ENCODE measurements at regions of chr1 and their contacts with region 1.

Region 1: DNA sequence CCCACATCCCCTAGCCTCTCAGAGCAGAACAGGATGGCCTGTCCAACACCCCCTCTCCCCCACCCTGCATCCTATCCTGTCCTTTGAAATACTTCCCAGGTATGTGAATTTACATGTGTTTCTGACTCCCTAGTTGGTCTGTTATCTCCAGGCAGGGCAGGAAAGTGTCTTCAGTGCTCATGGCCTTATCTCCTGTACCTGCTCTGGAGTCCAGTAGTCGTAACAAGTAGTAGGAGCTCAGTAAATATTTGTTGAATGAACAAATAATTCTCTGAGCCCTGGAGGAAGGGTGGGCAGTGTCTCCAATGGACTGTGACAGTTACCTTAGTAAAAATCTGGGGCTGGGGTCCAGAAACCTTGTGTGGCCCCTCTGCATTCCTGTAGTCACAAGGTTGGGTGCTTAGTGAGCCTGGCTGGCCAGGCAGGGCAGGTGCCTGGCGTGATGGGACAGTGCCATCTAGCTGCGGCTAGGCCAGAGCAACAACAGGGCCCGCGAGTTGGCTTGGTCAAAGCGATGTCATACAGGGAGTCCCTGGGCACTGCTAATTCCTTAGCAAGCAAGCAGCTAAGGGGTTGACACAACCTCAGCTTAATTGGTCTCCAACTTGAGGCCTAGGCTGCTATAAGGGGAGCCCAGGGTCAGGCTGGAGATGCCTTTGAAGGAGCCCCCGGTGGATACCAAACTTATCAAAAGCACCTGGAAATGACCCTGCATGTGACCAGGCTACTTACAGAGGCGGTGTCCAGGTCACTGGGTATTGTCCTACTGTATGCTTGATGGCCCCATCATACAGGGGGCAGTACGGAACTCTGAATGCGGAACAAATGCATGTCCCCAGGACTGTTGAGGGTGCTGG is 89.0 kb upstream of the PPM1J start:
- DNase-seq: no peak
- H3K4me3 ChIP-seq: no peak overlapping the region
- CTCF ChIP-seq: peak; percentile 89

Region 2: DNA sequence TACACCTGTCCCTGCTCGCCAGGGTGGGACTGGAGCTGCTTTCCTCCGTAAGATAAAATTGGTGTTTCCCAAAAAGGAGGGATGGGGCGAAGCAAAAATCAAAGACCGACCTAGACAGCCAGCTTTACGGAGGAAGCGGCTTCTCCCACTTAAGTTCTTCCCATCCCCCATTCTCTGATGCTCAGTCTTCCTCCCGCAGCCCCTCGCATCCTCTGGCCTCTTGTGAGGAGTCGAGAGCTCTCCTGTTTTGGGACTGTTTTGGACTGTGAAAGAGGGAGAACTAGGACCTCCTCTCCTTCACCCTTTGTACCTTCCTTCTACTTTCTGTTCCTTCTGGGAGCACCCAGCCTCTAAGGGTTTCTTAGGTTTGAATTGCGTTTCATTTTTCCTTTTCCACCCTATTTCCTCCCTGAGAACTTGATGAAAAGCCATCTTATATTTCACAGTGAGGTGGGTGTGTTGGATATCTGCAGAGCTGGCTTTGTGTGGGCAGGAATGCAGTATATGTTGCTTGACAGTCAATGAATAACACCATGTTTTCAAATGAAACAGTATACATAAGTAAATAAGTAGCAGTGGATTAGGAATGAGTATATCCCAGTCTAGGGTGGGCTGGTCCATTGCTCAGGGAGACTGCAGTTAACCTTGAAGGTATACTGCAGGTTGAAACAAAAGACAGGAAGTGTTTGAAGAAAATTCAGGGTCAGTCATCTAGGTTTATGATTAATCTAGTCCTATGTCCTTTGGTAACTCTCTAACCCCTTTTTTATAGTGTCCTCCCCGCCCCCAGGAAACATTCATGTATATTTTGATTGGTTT is 407.3 kb before region 1 on chr1:
- CTCF ChIA-PET with region 1: no interaction called
- POLR2A ChIA-PET with region 1: no interaction called
- DNase-seq: no peak
- H3K4me3 ChIP-seq: peak overlapping the region; percentile 98
- CTCF ChIP-seq: no peak

Region 3: GRCh38 chr1:112722601-112723510 is 81.3 kb before region 1 on chr1:
- CTCF ChIA-PET with region 1: interaction called, 1,029 read pairs
- POLR2A ChIA-PET with region 1: interaction called, 3 read pairs
- DNase-seq: no peak
- H3K4me3 ChIP-seq: peak overlapping the region; percentile 8; the same call in 1 of the 2 replicates
- CTCF ChIP-seq: no peak

Region 4: DNA sequence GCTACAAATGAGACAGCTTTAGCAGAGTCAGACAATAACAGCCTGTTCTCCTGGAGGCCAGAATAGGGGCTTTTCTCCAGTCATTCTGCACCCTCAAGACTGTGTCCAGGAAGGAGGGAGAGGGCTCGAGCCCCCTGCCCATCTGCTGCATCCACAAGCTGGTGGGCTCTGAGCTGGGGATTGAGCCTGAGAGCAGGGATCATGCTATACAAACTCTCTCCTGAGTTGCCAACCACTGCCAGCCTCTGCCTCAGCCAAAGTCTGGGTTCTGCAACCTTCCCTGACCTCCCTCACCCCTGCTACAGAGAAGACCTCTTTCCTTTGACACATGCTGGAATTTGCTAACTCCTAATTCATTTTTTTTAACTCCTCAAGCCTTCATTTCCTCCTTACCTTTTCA is 74.2 kb before region 1 on chr1:
- CTCF ChIA-PET with region 1: interaction called, 40 read pairs
- POLR2A ChIA-PET with region 1: interaction called, 3 read pairs
- DNase-seq: no peak
- H3K4me3 ChIP-seq: no peak overlapping the region
- CTCF ChIP-seq: no peak

Region 5: DNA sequence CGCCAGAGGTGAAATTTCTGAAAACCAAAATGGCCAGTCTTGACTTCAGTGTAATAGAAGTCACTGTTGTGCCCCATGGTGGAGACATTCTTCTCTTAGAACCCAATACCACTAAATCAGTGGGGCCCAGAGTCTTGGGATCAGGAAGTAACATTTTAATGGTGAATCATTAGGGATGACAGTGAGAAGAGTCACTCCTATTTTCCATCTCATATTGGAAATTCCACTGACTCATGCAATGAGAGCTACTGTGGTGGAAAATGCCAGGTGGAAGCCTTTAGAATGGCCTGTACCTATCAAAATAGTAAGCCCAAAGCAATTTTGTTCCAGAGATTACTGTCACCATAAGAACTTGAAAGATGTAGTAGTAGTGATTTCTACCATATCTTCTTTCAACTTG is 68.4 kb before region 1 on chr1:
- CTCF ChIA-PET with region 1: interaction called, 22 read pairs
- POLR2A ChIA-PET with region 1: no interaction called
- DNase-seq: no peak
- H3K4me3 ChIP-seq: no peak overlapping the region
- CTCF ChIP-seq: no peak

Region 6: DNA sequence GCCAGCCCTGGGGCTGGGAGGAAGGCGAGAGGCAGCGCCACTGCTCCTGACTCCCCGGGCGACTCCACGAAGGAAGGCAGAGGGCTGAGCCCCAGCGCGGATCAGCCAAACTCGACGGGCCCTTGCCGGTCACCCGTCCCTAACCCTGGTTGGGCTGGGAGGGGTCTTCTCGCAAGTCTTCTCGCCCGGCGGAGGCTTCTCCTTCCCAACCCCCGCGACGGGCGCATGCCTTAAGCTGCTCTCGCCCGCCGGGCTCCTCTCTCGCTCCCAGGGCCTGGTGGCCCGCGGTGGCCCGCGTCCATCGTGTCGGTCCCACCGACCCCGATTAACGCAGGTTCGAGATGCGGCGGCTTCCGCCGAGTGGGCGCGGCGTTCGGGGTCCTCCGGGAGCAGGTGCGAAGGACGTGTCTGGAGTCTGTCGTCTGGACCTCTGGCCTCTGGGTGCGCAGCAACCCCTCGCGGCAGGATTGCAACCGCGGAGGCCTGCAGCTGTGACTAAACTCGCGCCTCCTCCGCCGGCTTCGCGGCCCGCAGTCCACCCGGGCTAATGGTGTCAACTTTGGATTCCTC is 60.0 kb before region 1 on chr1:
- CTCF ChIA-PET with region 1: interaction called, 31 read pairs
- POLR2A ChIA-PET with region 1: no interaction called
- DNase-seq: no peak
- H3K4me3 ChIP-seq: peak overlapping the region; percentile 37
- CTCF ChIP-seq: peak; percentile 77

Region 7: GRCh38 chr1:112788561-112788960 is 15.6 kb before region 1 on chr1:
- CTCF ChIA-PET with region 1: interaction called, 22 read pairs
- POLR2A ChIA-PET with region 1: no interaction called
- DNase-seq: no peak
- H3K4me3 ChIP-seq: no peak overlapping the region
- CTCF ChIP-seq: no peak

Region 8: GRCh38 chr1:113042285-113043143 is 238.4 kb after region 1 on chr1:
- CTCF ChIA-PET with region 1: interaction called, 77 read pairs
- POLR2A ChIA-PET with region 1: no interaction called
- DNase-seq: peak; percentile 69
- H3K4me3 ChIP-seq: no peak overlapping the region; the same call in 1 of the 2 replicates
- CTCF ChIP-seq: peak; percentile 57